HEK293T (cell line): ENCODE measurements at regions of chr4 and their contacts with region 1.

Region 1: DNA sequence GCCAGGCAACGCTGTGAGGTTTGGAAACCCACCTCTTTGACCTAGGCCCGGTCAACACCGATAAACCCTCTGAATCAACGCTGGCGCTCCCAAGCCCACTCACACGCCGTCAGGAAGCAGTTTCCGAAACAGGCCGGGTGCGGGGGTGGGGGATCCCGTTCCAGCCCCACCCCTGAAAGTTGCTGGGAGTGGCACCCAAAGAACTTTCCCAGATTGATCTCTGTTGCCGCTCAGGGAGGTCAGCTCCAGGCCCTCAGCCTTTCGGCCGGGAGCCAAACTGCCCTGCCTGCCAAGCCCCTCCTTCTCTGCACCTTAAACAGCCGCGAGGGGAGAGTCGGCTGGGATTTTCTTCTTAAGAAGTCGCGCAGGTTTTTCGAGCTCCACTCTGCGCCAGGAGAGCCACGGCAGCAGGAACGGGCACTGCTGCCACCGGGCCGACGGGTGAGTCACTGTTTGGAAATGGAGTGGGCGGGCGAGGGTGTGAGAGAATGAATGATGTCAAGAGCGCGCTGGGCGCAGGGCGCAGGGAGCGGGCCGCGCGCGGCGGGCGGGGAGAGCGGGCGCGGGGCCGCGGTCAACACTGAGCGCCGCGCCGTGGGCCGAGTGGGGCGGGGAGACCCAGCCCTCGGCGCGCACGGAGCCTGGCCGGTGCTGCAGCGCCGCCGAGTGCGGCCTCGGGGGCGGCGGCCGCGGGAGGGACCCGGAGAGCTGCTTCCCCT is at the start of gene SGMS2:
- DNase-seq: peak; percentile 61

Region 2: DNA sequence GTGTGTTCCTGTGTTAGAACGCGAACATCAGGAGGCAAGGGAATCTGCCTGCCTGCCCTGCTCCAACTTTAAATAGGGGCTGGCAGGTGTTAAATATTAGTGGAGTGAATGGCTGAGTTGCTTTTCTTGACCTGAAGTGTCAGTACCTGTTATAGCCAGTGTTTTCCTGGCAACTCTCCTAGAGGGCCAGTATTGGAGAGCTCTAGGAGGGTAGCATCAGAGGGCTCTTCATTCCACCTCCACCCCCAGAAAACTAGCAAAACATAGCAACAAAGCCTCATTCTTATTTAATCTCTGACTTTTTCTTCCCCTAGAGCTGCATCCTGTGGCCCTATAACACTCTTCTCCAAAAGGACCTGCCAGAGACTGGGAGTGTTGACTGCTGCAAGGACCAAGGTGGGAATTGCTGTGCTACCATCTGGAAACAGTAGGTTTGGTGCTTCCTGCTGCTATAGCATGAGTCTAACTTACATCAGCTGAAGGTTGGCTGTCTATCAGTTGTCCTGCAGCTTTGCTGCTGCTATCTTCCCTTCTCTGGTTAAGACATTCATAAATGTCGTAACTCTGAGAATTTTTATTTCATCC is 33.7 kb after region 1 on chr4:
- CTCF ChIA-PET with region 1: no interaction called
- POLR2A ChIA-PET with region 1: interaction called, 10 read pairs
- DNase-seq: no peak